ENCODE measurements at regions of chr1 and their contacts with region 1.

Region 1: DNA sequence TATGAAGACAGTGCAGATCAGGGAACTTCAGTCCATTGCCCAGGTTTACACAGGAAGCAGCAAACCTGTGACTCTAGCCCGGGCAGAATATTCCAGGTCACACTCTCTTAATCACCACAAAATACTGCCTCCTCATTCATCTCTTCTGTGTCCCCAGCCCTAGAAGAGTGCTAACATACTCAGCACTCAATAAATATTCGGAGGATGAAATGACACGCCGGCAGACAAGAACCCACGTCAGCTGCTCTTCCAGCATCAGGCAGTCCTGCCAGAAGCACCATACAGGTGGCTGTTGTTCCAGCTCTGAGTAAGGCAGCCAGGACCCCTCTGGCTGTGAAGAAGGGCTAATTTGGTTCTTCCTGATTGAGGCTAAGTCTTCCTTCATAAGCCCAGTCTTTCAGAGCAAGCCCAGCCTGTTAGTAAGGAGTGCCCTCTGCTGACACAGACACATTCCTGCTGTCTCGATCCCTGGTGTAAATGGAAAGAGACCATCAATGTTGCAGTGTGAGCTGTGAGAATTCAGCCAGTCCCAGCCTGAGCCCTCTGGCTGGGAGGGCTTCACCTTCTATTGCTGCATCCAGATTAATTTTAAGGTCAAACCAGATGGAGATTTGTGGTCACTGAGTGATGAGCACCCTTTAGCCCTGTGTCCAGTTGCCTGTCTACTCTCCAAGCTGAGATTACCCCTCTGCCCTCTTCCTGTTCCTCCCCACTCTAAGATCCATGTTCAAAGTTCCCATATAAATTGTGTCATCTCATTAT is 45.0 kb upstream of the KIRREL1 start:
- DNase-seq: peak in 1 of 2 experiments; percentile 39
- H3K4me3 ChIP-seq: no peak overlapping the region
- H3K27ac ChIP-seq: no peak overlapping the region
- H3K4me1 ChIP-seq: no peaks in the 10 kb centered on the region
- H3K27me3 ChIP-seq: no peaks in the 10 kb centered on the region
- CTCF ChIP-seq: peak; percentile 65 to 96 (median 91)
- EP300 ChIP-seq: no peak
- POLR2A ChIP-seq: no peak
- RAD21 ChIP-seq: peak; percentile 99

Region 2: DNA sequence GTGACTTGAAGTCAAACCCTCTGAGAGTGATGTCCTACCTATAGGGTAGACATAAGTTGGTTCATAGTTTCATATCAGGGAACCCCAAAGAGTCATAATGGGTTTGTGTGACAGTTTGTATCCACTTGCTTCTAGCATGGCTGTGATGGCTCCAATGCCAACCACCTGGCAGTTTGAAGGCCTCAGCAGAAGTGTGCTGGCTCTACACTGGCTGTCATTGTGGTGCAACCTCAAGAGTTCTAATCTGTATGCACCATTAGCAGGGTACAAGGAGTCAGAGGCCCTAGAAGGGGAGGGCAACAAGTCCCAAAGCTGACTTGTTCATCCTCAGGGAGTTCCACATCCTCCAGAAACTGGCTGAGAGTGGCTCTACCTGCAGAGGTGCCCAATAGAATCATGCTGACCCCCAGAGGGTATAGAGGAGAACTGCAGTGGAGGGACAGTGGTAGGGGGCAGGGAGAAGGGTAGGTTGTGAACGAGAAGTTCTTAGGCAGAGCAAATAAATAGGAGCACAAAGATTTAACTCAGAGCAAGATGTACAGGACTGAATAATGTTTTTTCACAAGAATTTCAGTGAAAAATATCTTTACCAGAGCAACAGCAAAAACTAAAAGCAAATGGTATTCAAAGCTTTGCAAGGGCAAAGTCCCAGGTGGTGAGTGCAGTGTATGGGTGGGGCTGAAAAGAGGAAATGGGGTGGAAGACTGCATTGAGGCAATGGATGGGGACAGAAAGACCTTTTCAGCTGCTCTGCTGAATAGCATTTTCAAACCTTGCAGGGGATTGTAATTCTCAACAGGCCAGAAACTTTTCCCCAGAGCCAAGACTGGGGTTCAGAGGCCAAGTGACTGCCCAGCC is 174.8 kb before region 1 on chr1:
- CTCF ChIA-PET with region 1: interaction called, 21 read pairs
- POLR2A ChIA-PET with region 1: no interaction called
- DNase-seq: peak in 1 of 2 experiments; percentile 29
- H3K4me3 ChIP-seq: no peak overlapping the region
- H3K27ac ChIP-seq: no peak overlapping the region
- H3K4me1 ChIP-seq: no peaks in the 10 kb centered on the region
- H3K27me3 ChIP-seq: no peaks in the 10 kb centered on the region; a peak in 1 of 7 replicates
- CTCF ChIP-seq: peak; percentile 70 to 83 (median 79)
- EP300 ChIP-seq: no peak
- POLR2A ChIP-seq: no peak
- RAD21 ChIP-seq: peak; percentile 85 to 89

Region 3: DNA sequence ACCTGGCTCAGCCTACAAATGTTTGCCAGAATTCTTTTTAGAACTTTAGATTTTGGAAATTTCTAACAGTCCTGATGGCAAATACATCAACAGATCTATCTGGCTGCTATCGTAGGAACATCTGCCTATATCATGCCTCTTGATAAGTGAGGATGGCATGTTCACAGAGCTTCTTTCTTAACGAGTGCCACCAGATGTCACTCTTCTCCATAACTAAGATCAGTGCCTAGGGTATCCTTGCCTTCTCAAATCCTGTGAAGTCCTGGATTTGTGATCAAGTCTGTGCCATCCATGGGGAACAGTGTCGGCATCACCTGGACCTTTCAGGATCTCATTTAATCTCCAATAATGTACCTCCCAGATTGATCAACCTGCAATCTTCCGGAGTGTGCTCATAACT is 70.4 kb before region 1 on chr1:
- CTCF ChIA-PET with region 1: interaction called, 19 read pairs
- POLR2A ChIA-PET with region 1: no interaction called
- DNase-seq: peak in 1 of 2 experiments; percentile 10
- H3K4me3 ChIP-seq: no peak overlapping the region
- H3K27ac ChIP-seq: no peak overlapping the region
- H3K4me1 ChIP-seq: no peaks in the 10 kb centered on the region
- H3K27me3 ChIP-seq: no peaks in the 10 kb centered on the region; a peak in 1 of 7 replicates
- CTCF ChIP-seq: peak in 2 of 3 experiments; percentile 61 to 70; a peak in 3 of 4 replicates
- EP300 ChIP-seq: no peak
- POLR2A ChIP-seq: no peak
- RAD21 ChIP-seq: peak; percentile 75 to 81

Region 4: GRCh38 chr1:157932069-157932468 is 16.4 kb before region 1 on chr1:
- CTCF ChIA-PET with region 1: interaction called, 10 read pairs
- POLR2A ChIA-PET with region 1: no interaction called
- DNase-seq: no peak
- H3K4me3 ChIP-seq: no peak overlapping the region
- H3K27ac ChIP-seq: no peak overlapping the region
- H3K4me1 ChIP-seq: no peaks in the 10 kb centered on the region
- H3K27me3 ChIP-seq: no peaks in the 10 kb centered on the region
- CTCF ChIP-seq: no peak
- EP300 ChIP-seq: no peak
- POLR2A ChIP-seq: no peak
- RAD21 ChIP-seq: no peak

Region 5: GRCh38 chr1:157963713-157964112 is 15.2 kb after region 1 on chr1:
- CTCF ChIA-PET with region 1: interaction called, 110 read pairs
- POLR2A ChIA-PET with region 1: no interaction called
- DNase-seq: peak; percentile 17 to 86
- H3K4me3 ChIP-seq: no peak overlapping the region
- H3K27ac ChIP-seq: no peak overlapping the region
- H3K4me1 ChIP-seq: peaks cover 0 to 8% (median 1%) of the 10 kb centered on the region in 4 experiments; a peak in 3 of 7 replicates
- H3K27me3 ChIP-seq: peaks cover 0 to 2% (median 0%) of the 10 kb centered on the region in 4 experiments; a peak in 1 of 7 replicates
- CTCF ChIP-seq: peak; percentile 75 to 95 (median 76)
- EP300 ChIP-seq: no peak
- POLR2A ChIP-seq: no peak
- RAD21 ChIP-seq: peak; percentile 96 to 97

Region 6: GRCh38 chr1:158124999-158125398 is 176.5 kb after region 1 on chr1:
- CTCF ChIA-PET with region 1: interaction called, 81 read pairs
- POLR2A ChIA-PET with region 1: no interaction called
- DNase-seq: peak; percentile 89 to 91
- H3K4me3 ChIP-seq: no peak overlapping the region
- H3K27ac ChIP-seq: no peak overlapping the region
- H3K4me1 ChIP-seq: peaks cover 0 to 10% (median 7%) of the 10 kb centered on the region in 4 experiments; a peak in 5 of 7 replicates
- H3K27me3 ChIP-seq: no peaks in the 10 kb centered on the region
- CTCF ChIP-seq: peak; percentile 76 to 99 (median 97)
- EP300 ChIP-seq: 0 out of 3 replicates have a peak, but pooled peaks of 1 of the 2 experiments have one; percentile 26
- POLR2A ChIP-seq: no peak
- RAD21 ChIP-seq: peak; percentile 99 to 100

Measured in H1 (cell line).